ENCODE measurements at regions of chr14 and their contacts with region 1.

Region 1: DNA sequence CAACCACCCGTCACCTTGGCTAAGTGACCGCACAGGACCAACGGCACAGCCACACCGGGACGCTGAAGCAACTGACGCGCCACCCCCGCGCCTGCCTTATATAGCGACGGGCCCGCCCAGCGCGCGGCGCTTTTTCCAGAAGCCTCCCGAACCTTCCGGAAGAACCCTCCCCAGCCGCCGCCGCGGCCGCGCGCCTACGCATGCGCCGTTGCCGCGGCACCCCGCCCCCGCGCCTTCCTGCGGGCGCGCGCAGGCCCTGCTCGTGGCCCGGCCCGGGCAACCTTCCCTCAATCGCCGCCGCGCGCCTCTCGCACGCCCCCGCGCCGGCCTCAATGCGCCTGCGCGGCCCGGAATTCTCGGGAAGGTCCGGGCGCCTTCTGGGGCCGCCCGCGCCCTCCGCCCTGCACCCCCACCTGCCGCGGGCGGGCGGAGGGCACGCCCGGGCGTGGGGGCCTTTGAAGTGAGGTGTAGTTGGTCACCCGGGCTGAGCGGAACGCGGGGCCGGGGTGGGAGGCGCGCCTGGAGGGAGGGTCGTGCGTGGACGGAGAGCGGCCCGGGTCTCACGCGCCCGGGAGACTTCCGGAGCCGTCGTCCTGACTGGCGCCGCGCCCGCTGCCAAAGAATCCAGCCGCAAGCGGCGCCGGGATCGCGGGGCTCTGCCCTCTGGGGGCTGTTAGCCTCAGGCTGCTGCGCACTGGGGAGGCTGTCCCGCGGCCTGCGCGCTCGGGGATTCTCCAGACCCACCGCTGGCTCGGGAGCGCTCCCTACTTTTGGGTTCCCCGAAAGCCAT is at the start of gene HSP90AA1:
- DNase-seq: peak; percentile 96
- H3K4me3 Mint-ChIP-seq: peak within 1 kb of the TSS; percentile 84
- H3K27ac Mint-ChIP-seq: peak within 1 kb of the TSS; percentile 94
- H3K4me1 Mint-ChIP-seq: peaks cover 43% of the 10 kb centered on the region
- H3K27me3 Mint-ChIP-seq: no peaks in the 10 kb centered on the region
- total RNA-seq, gene HSP90AA1: 1,107 to 1,148 TPM

Region 2: GRCh38 chr14:101947906-101948665 is 139.1 kb before region 1 on chr14:
- CTCF ChIA-PET with region 1: no interaction called
- POLR2A ChIA-PET with region 1: no interaction called
- intact Hi-C with region 1: loop called (anchors 5 kb)
- DNase-seq: peak; percentile 100
- H3K4me3 Mint-ChIP-seq: peak overlapping the region; percentile 92
- H3K27ac Mint-ChIP-seq: peak overlapping the region; percentile 95
- H3K4me1 Mint-ChIP-seq: peaks cover 15% of the 10 kb centered on the region
- H3K27me3 Mint-ChIP-seq: peaks cover 20% of the 10 kb centered on the region

Region 3: GRCh38 chr14:102111101-102111500 is 23.9 kb after region 1 on chr14:
- CTCF ChIA-PET with region 1: no interaction called
- POLR2A ChIA-PET with region 1: no interaction called
- intact Hi-C with region 1: no loop called
- DNase-seq: no peak
- H3K4me3 Mint-ChIP-seq: no peak overlapping the region
- H3K27ac Mint-ChIP-seq: no peak overlapping the region
- H3K4me1 Mint-ChIP-seq: no peaks in the 10 kb centered on the region
- H3K27me3 Mint-ChIP-seq: no peaks in the 10 kb centered on the region

Region 4: DNA sequence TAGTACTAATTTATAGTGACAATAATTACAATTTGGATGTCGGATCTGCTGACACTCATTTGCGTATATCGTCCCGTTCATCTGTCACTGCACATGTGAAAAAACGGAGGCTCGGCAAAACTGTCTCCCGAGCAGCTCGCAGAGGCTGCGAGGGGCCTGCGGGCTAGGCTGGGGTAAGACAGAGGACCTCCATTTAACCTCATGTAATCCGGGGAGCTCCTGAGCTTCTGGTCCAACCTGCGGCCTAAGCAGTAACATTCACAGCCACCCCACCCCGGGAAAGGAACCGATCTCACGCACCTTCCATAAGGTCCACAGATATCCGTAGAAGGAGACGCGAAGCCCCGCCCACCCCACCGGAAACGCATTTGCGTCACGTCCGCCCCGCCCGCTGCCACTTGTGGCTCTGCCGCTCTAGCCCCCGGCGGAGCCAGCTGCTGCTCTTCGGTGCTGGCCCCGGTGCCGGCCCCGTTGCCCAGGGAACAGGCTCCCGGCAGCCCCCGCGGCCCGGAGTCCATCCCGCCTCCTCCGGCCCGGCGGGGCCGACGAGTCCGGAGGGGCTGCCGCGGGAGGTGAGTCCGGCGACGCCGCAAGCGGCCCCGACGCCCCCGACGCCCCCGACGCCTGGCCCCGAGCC is 275.5 kb after region 1 on chr14 and contains the starts of genes CINP and TECPR2:
- CTCF ChIA-PET with region 1: no interaction called
- POLR2A ChIA-PET with region 1: interaction called, 4 read pairs
- intact Hi-C with region 1: loop called (anchors 1 kb)
- DNase-seq: peak; percentile 99
- H3K4me3 Mint-ChIP-seq: no peak within 1 kb of the TSS
- H3K27ac Mint-ChIP-seq: peak within 1 kb of the TSS; percentile 96
- H3K4me1 Mint-ChIP-seq: peaks cover 31% of the 10 kb centered on the region
- H3K27me3 Mint-ChIP-seq: no peaks in the 10 kb centered on the region
- total RNA-seq, gene CINP: 50.5 to 51.2 TPM
- total RNA-seq, gene TECPR2: 6.2 to 7.0 TPM

Region 5: GRCh38 chr14:102683399-102684297 is 596.5 kb after region 1 on chr14:
- CTCF ChIA-PET with region 1: no interaction called
- POLR2A ChIA-PET with region 1: no interaction called
- intact Hi-C with region 1: no loop called
- DNase-seq: no peak
- H3K4me3 Mint-ChIP-seq: no peak overlapping the region
- H3K27ac Mint-ChIP-seq: no peak overlapping the region
- H3K4me1 Mint-ChIP-seq: peaks cover 7% of the 10 kb centered on the region
- H3K27me3 Mint-ChIP-seq: no peaks in the 10 kb centered on the region

Region 6: GRCh38 chr14:103333754-103334643 is 1246.8 kb after region 1 on chr14 and contains the start of gene EIF5:
- CTCF ChIA-PET with region 1: no interaction called
- POLR2A ChIA-PET with region 1: interaction called, 3 read pairs
- intact Hi-C with region 1: loop called (anchors 10 kb)
- DNase-seq: peak; percentile 99
- H3K4me3 Mint-ChIP-seq: peak within 1 kb of the TSS; percentile 88
- H3K27ac Mint-ChIP-seq: peak within 1 kb of the TSS; percentile 96
- H3K4me1 Mint-ChIP-seq: peaks cover 47% of the 10 kb centered on the region
- H3K27me3 Mint-ChIP-seq: peaks cover 1% of the 10 kb centered on the region
- total RNA-seq, gene EIF5: 192 to 196 TPM

Measured in activated CD4-positive, alpha-beta memory T cell treated with anti-CD3 and anti-CD28 coated beads for 36 hours (primary cell).